ENCODE measurements at regions of chr17 and their contacts with region 1.

Region 1: GRCh38 chr17:80832888-80833583 is 158.6 kb upstream of the CHMP6 start:
- DNase-seq: peak; percentile 85 to 88
- H3K4me3 ChIP-seq: peak overlapping the region; percentile 54; the same call in 1 of the 2 replicates
- H3K27ac ChIP-seq: peak overlapping the region; percentile 82
- H3K4me1 ChIP-seq: peaks cover 8% of the 10 kb centered on the region
- H3K27me3 ChIP-seq: no peaks in the 10 kb centered on the region
- CTCF ChIP-seq: no peak

Region 2: GRCh38 chr17:79965806-79966205 is 867.2 kb before region 1 on chr17:
- CTCF ChIA-PET with region 1: no interaction called
- POLR2A ChIA-PET with region 1: no interaction called
- intact Hi-C with region 1: no loop called
- DNase-seq: no peak
- H3K4me3 ChIP-seq: no peak overlapping the region
- H3K27ac ChIP-seq: no peak overlapping the region
- H3K4me1 ChIP-seq: no peaks in the 10 kb centered on the region
- H3K27me3 ChIP-seq: no peaks in the 10 kb centered on the region
- CTCF ChIP-seq: no peak

Region 3: GRCh38 chr17:80619535-80620312 is 213.3 kb before region 1 on chr17:
- CTCF ChIA-PET with region 1: no interaction called
- POLR2A ChIA-PET with region 1: no interaction called
- intact Hi-C with region 1: loop called (anchors 5 kb)
- DNase-seq: peak; percentile 50 to 88
- H3K4me3 ChIP-seq: no peak overlapping the region; the same call in 1 of the 2 replicates
- H3K27ac ChIP-seq: peak overlapping the region; percentile 81
- H3K4me1 ChIP-seq: peaks cover 23% of the 10 kb centered on the region
- H3K27me3 ChIP-seq: no peaks in the 10 kb centered on the region
- CTCF ChIP-seq: no peak

Region 4: DNA sequence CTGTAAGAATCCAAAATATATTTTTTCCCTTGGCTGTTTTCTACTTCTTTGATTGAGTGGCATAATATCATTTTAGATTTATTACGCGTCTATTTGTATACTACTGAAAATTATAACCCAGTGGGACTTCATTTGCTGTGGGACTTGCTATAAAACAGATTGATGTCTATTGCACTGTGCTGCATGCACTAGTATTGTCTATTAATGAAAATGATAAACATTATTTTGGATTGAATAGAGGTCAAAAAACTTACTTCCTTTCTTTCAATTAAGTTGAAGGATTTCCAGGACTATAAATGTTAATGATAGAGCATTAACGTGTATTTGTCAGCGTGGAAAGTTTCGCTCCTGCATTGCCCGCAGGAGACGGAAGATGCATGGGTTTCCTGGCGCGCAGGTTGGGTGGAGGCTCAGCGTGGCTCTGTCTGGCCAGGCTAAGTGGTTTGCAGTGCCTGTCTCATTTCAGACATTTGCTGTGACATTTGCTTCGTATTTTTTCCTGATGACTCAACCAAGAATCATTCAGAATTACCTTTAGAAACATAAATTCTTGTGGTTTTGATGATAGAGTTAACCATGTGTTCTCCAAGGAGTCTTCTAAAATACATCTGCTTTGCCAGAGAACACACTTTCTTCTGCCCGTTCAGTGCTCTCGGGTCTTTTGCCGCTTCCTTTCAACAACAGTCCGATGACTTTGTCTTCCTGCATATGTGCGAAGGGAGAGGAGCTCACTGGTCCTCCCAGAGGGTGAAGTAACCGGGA is 71.7 kb before region 1 on chr17:
- CTCF ChIA-PET with region 1: no interaction called
- POLR2A ChIA-PET with region 1: no interaction called
- intact Hi-C with region 1: loop called (anchors 2 kb)
- DNase-seq: peak; percentile 59 to 86
- H3K4me3 ChIP-seq: peak overlapping the region; percentile 27; the same call in 1 of the 2 replicates
- H3K27ac ChIP-seq: peak overlapping the region; percentile 69
- H3K4me1 ChIP-seq: peaks cover 40% of the 10 kb centered on the region
- H3K27me3 ChIP-seq: no peaks in the 10 kb centered on the region
- CTCF ChIP-seq: no peak

Region 5: GRCh38 chr17:80819461-80820161 is 13.4 kb before region 1 on chr17:
- CTCF ChIA-PET with region 1: no interaction called
- POLR2A ChIA-PET with region 1: no interaction called
- intact Hi-C with region 1: no loop called
- DNase-seq: no peak
- H3K4me3 ChIP-seq: no peak overlapping the region
- H3K27ac ChIP-seq: no peak overlapping the region
- H3K4me1 ChIP-seq: no peaks in the 10 kb centered on the region; the same call in 1 of the 2 replicates
- H3K27me3 ChIP-seq: no peaks in the 10 kb centered on the region
- CTCF ChIP-seq: no peak

Region 6: GRCh38 chr17:80845863-80846671 is 13.0 kb after region 1 on chr17:
- CTCF ChIA-PET with region 1: no interaction called
- POLR2A ChIA-PET with region 1: no interaction called
- intact Hi-C with region 1: no loop called
- DNase-seq: no peak
- H3K4me3 ChIP-seq: no peak overlapping the region
- H3K27ac ChIP-seq: no peak overlapping the region
- H3K4me1 ChIP-seq: no peaks in the 10 kb centered on the region
- H3K27me3 ChIP-seq: no peaks in the 10 kb centered on the region
- CTCF ChIP-seq: no peak

Region 7: GRCh38 chr17:80855948-80856862 is 23.2 kb after region 1 on chr17:
- CTCF ChIA-PET with region 1: no interaction called
- POLR2A ChIA-PET with region 1: interaction called, 4 read pairs
- intact Hi-C with region 1: loop called (anchors 2 kb)
- DNase-seq: peak; percentile 87 to 90
- H3K4me3 ChIP-seq: no peak overlapping the region; the same call in 1 of the 2 replicates
- H3K27ac ChIP-seq: peak overlapping the region; percentile 98
- H3K4me1 ChIP-seq: peaks cover 23% of the 10 kb centered on the region
- H3K27me3 ChIP-seq: no peaks in the 10 kb centered on the region
- CTCF ChIP-seq: no peak

Region 8: DNA sequence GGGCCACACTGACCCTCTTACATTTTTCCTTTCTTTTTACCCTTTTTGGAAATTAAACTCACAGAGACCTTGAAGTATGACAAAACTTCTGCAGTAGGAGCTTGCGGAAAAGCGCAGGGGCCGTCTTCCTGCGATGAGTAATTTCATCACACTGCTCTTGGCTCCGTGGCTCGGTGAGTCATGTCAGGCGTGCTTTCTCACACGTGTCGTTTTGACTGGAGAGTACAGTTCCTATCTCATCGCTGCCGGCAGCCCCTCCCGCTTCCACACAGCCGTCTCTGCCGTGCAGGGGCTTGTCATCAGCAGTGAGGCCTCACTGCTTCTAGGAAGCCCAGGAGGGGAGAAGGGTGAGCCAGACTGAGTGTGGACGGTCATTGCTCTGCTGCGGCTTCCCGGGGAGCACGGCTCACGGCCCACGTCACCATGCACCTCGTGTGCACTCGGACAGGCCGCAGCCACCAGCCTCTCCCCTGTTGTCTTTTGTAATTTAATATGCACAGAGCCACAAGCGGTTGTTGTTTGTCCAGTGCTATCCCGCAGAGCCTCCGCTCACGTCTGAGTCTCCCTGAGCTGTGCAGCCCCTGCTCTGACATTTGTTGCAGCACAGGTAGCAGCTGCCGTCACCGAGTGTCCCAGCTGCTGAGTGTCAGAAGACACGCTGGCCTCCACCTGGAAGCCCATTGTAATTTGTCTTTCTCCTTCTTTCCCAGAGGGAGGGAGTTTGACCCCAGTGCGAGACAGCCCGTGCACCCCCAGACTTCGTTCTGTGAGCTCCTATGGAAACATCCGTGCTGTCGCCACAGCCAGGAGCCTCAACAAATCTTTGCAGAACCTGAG is 59.2 kb after region 1 on chr17:
- CTCF ChIA-PET with region 1: no interaction called
- POLR2A ChIA-PET with region 1: no interaction called
- intact Hi-C with region 1: loop called (anchors 2 kb)
- DNase-seq: peak; percentile 83 to 85
- H3K4me3 ChIP-seq: peak overlapping the region; percentile 44; the same call in 1 of the 2 replicates
- H3K27ac ChIP-seq: peak overlapping the region; percentile 95
- H3K4me1 ChIP-seq: peaks cover 31% of the 10 kb centered on the region
- H3K27me3 ChIP-seq: no peaks in the 10 kb centered on the region
- CTCF ChIP-seq: 0 out of 2 replicates have a peak, but pooled peaks have one; percentile 0